Activated CD8-positive, alpha-beta memory T cell treated with anti-CD3 and anti-CD28 coated beads, Interleukin-2, amount 10 ng/mL, durations not matched to agents 7 days and 5 days (primary cell): ENCODE measurements at regions of chr9 and their contacts with region 1.

Region 1: DNA sequence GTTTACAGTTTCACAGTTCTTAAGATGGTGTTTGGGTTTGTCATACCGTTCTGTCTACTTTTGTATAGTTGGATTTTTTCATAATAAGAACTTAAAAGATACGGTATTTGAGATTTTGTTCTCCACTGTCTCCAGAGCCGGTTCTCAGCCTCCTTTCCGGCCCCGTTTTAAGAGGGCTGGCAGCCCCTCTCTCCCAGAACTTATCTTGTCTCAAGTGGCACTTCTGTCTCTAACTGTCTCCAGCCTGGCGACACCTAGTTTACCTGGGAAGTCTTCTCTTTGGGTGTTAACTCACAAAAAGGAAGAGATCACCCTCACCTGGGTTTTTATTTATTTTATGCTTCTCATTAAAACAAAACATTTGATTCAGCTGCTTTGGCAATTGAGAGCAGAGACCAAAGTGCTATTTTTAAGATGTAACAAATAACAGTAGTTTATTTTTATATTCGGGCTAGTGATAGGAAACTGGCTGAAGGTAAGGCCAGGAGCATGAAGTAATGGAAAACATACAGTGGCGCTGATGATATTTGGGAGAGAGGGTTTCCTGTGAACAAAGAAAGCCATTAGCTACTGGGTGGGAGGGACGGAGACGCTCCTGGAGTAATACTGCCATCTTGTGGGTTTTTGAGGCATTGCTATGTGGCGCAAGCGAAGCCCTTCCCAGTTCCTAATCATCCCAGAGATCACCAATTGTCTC is 48.3 kb downstream of the ACER2 start:
- DNase-seq: peak; percentile 74
- ATAC-seq: peak; percentile 95
- H3K4me3 Mint-ChIP-seq: peak overlapping the region; percentile 53
- H3K27ac Mint-ChIP-seq: no peak overlapping the region
- H3K4me1 Mint-ChIP-seq: peaks cover 15% of the 10 kb centered on the region
- H3K27me3 Mint-ChIP-seq: no peaks in the 10 kb centered on the region

Region 2: DNA sequence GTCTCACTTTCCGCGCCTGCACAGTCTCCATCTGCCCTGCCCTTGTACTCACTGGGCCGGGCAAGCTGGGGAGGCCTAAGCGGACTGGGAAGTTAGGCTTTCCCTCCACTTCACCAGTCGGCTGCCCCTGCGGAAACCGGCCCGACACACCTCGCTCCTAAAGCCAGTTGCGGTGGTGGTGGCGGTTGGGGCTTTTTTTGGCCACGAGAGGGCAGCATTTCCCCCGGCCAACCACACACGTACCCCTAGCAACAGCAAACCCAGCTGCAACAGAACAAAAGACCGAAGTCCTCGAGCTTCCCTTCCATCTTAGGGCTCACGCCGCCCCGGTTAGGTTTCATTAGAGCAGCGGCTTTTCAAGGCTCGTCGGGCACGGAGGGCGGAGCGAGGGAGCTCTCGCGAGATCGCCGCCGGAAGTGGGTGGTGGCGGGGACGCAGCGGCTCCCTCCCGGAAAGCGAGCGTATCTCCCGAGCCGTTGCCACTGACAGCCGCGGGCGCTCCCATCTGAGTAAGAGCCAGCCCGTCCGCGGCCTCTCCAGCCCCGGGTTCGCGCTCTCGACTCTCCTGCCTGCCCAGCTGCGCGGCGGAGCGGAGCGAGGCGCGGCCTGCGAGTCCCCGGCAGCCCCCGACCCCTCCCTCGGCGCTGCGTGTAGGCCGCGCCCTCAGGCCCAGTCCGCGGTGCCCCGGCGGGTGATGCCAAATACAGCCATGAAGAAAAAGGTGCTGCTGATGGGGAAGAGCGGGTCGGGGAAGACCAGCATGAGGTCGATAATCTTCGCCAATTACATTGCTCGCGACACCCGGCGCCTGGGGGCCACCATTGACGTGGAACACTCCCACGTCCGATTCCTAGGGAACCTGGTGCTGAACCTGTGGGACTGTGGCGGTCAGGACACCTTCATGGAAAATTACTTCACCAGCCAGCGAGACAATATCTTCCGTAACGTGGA is 407.9 kb before region 1 on chr9 and contains the start of gene RRAGA:
- CTCF ChIA-PET with region 1: interaction called, 26 read pairs
- DNase-seq: peak; percentile 96
- ATAC-seq: peak; percentile 92
- H3K4me3 Mint-ChIP-seq: peak within 1 kb of the TSS; percentile 93
- H3K27ac Mint-ChIP-seq: peak within 1 kb of the TSS; percentile 99
- H3K4me1 Mint-ChIP-seq: peaks cover 28% of the 10 kb centered on the region
- H3K27me3 Mint-ChIP-seq: no peaks in the 10 kb centered on the region
- total RNA-seq, gene RRAGA: 43.5 to 49.7 TPM

Region 3: DNA sequence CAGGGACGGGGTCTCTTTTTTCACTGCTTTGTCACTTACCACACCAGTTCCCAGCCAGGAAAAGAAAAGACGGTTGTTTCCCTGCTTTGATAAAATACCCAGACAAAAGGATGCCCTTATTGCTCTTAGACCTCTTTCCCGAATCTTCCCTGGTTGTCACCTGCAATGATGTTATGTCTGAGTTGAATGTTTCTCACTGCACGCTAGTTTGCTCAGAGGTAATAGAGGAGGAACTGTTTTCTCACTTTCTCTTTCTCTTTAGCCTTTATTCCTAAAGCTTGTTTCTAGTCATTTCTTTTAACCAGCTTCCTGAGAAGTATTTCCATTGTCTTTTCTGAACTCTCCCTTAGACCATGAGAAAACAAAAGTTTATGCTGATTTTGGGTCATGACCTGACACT is 15.4 kb before region 1 on chr9:
- CTCF ChIA-PET with region 1: interaction called, 23 read pairs
- DNase-seq: no peak
- ATAC-seq: peak; percentile 86
- H3K4me3 Mint-ChIP-seq: peak overlapping the region; percentile 71
- H3K27ac Mint-ChIP-seq: peak overlapping the region; percentile 79
- H3K4me1 Mint-ChIP-seq: peaks cover 17% of the 10 kb centered on the region
- H3K27me3 Mint-ChIP-seq: no peaks in the 10 kb centered on the region